Astrocyte of the cerebellum (primary cell): ENCODE measurements at regions of chr2 and their contacts with region 1.

Region 1: DNA sequence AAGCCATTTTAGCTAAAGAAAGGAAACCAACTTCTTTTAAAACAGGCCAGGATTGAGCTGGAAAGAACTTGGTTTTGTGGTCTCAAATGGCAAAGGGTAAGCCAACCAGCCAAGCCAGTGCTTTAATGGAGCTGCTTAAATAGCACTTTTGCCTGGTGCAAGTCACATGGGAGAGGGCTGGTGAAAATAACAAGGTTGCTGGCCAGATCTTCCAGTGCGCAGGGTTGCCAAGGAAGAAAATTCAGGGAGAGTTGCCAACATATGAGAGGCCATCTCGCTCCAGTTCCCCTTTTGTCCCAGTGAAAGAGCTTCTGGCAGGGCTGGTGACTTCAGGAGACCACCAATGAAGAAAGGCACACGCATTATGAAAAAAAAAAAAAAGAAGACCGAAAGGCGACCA is 57.3 kb downstream of the IRS1 start:
- DNase-seq: peak; percentile 78
- H3K4me3 ChIP-seq: no peak overlapping the region
- CTCF ChIP-seq: no peak

Region 2: GRCh38 chr2:226673314-226673723 is 69.0 kb before region 1 on chr2:
- in situ Hi-C with region 1: loop called (anchors 5 kb)
- DNase-seq: peak; percentile 79
- H3K4me3 ChIP-seq: no peak overlapping the region
- CTCF ChIP-seq: no peak

Region 3: GRCh38 chr2:226683944-226684568 is 58.3 kb before region 1 on chr2:
- in situ Hi-C with region 1: no loop called
- DNase-seq: no peak
- H3K4me3 ChIP-seq: no peak overlapping the region
- CTCF ChIP-seq: no peak

Region 4: DNA sequence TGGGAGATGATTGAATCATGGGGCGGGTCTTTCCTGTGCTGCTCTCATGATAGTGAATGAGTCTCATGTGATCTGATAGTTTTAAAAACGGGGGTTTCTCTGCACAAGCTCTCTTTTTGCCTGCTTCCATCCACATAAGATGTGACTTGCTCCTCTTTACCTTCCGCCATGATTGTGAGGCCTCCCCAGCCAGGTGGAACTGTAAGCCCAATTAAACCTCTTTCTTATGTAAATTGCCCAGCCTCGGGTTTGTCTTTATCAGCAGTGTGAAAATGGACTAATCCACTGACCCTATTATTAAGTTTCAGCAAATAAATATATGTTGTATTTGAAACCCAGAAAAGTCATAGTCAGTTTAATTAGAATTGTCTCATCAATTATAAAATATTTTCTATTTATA is 35.3 kb after region 1 on chr2:
- in situ Hi-C with region 1: loop called (anchors 5 kb)
- DNase-seq: no peak
- H3K4me3 ChIP-seq: no peak overlapping the region
- CTCF ChIP-seq: no peak

Region 5: GRCh38 chr2:226835796-226836547 is 93.6 kb after region 1 on chr2 and contains the start of gene RHBDD1:
- in situ Hi-C with region 1: no loop called
- DNase-seq: peak; percentile 84
- H3K4me3 ChIP-seq: peak within 1 kb of the TSS; percentile 69
- CTCF ChIP-seq: no peak